ENCODE measurements at regions of chr2 and their contacts with region 1.

Region 1: GRCh38 chr2:26785431-26786206 is at the start of gene CENPA:
- DNase-seq: peak; percentile 98
- ATAC-seq: peak; percentile 99
- H3K4me3 ChIP-seq: peak within 1 kb of the TSS; percentile 51 to 81 (median 71)
- H3K4me3 Mint-ChIP-seq: peak within 1 kb of the TSS; percentile 93
- H3K27ac ChIP-seq: peak within 1 kb of the TSS; percentile 27 to 41
- H3K27ac Mint-ChIP-seq: peak within 1 kb of the TSS; percentile 83
- H3K4me1 ChIP-seq: peaks cover 8 to 14% of the 10 kb centered on the region in 2 donors
- H3K4me1 Mint-ChIP-seq: peaks cover 13% of the 10 kb centered on the region
- H3K27me3 ChIP-seq: no peaks in the 10 kb centered on the region
- H3K27me3 Mint-ChIP-seq: peaks cover 3% of the 10 kb centered on the region
- CTCF ChIP-seq: peak; percentile 7
- total RNA-seq, gene CENPA: not detected in 2 replicates

Region 2: DNA sequence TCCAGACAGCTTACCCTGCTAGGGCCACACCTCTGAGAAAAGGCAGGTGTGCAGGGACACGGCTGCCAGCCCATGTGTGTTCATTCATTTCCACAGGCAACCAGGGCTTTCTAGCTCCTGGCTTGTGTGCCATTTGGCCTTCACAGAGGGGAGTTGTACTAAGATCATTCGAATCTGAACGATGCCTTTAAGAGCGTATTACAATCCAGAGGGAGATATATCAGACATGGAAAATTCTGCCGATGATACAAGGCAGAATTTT is 243.5 kb before region 1 on chr2:
- CTCF ChIA-PET with region 1: no interaction called
- POLR2A ChIA-PET with region 1: no interaction called
- intact Hi-C with region 1: no loop called
- DNase-seq: no peak
- ATAC-seq: no peak
- H3K4me3 ChIP-seq: no peak overlapping the region
- H3K4me3 Mint-ChIP-seq: no peak overlapping the region
- H3K27ac ChIP-seq: no peak overlapping the region
- H3K27ac Mint-ChIP-seq: no peak overlapping the region
- H3K4me1 ChIP-seq: no peaks in the 10 kb centered on the region
- H3K4me1 Mint-ChIP-seq: no peaks in the 10 kb centered on the region
- H3K27me3 ChIP-seq: peaks cover 0 to 3% (median 0%) of the 10 kb centered on the region in 4 experiments
- H3K27me3 Mint-ChIP-seq: peaks cover 10% of the 10 kb centered on the region
- CTCF ChIP-seq: no peak

Region 3: GRCh38 chr2:26764078-26764887 is 21.3 kb before region 1 on chr2 and contains the start of gene SLC35F6:
- CTCF ChIA-PET with region 1: no interaction called
- POLR2A ChIA-PET with region 1: interaction called, 7 read pairs
- intact Hi-C with region 1: loop called (anchors 1 kb)
- DNase-seq: peak; percentile 89
- ATAC-seq: peak; percentile 98
- H3K4me3 ChIP-seq: peak within 1 kb of the TSS; percentile 78 to 98 (median 89)
- H3K4me3 Mint-ChIP-seq: peak within 1 kb of the TSS; percentile 82
- H3K27ac ChIP-seq: peak within 1 kb of the TSS; percentile 62 to 84
- H3K27ac Mint-ChIP-seq: peak within 1 kb of the TSS; percentile 82
- H3K4me1 ChIP-seq: peaks cover 14 to 25% of the 10 kb centered on the region in 2 donors
- H3K4me1 Mint-ChIP-seq: peaks cover 22% of the 10 kb centered on the region
- H3K27me3 ChIP-seq: no peaks in the 10 kb centered on the region
- H3K27me3 Mint-ChIP-seq: no peaks in the 10 kb centered on the region
- CTCF ChIP-seq: no peak
- total RNA-seq, gene SLC35F6: 13.3 and 15.2 TPM in 2 replicates

Region 4: GRCh38 chr2:26970244-26970920 is 184.8 kb after region 1 on chr2 and contains the start of gene MAPRE3:
- CTCF ChIA-PET with region 1: no interaction called
- POLR2A ChIA-PET with region 1: no interaction called
- intact Hi-C with region 1: loop called (anchors 2 kb)
- DNase-seq: peak; percentile 92
- ATAC-seq: peak; percentile 94
- H3K4me3 ChIP-seq: peak within 1 kb of the TSS; percentile 59 to 70 (median 62)
- H3K4me3 Mint-ChIP-seq: peak within 1 kb of the TSS; percentile 91
- H3K27ac ChIP-seq: peak within 1 kb of the TSS in 1 of 2 donors; percentile 47
- H3K27ac Mint-ChIP-seq: peak within 1 kb of the TSS; percentile 59
- H3K4me1 ChIP-seq: peaks cover 11 to 12% of the 10 kb centered on the region in 2 donors
- H3K4me1 Mint-ChIP-seq: peaks cover 19% of the 10 kb centered on the region
- H3K27me3 ChIP-seq: peaks cover 2 to 11% (median 5%) of the 10 kb centered on the region in 4 experiments
- H3K27me3 Mint-ChIP-seq: peaks cover 26% of the 10 kb centered on the region
- CTCF ChIP-seq: no peak
- total RNA-seq, gene MAPRE3: 5.4 and 7.1 TPM in 2 replicates

Region 5: DNA sequence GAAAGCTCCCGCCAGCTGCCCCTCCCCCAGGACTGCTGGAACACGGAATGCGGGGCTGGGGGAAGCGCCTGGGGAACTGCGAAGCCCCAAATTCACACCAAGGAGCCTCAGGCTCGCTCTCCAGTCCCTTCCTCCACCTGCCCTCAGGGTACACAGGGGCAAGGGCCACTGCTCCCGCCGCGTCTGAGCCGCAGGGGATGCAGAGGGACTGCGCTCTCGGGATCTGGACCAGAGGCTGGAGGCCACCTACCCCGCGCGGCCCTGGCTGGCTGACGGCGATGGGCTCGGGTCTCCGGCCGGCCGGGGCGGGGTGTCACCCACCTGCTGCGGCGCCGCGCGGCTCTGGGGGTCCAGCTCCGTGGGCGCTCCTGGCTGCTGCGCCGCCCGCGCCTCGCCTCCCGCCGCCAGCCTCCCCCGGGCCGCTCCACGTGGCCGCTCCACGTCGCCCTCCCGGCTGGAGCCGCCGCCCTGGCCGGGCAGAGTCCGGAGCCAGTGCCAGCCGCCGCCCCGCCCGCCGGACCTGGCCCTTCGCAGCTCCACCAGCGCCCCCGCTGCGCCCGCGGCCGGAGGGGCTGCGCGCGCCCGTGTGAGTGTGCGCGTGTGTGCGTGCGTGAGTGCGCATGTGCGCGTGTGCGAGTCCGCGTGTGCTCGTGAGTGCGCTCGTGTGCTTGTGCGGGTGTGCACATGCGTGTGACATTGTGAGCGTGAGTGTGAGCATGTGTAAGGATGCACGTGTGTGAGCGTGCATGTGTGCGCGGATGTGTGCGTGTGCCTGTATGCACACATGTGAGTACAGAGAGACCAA is 333.1 kb after region 1 on chr2 and contains the start of gene CGREF1:
- CTCF ChIA-PET with region 1: no interaction called
- POLR2A ChIA-PET with region 1: no interaction called
- intact Hi-C with region 1: no loop called
- DNase-seq: peak; percentile 38
- ATAC-seq: no peak
- H3K4me3 ChIP-seq: peak within 1 kb of the TSS in 2 of 5 experiments; percentile 38 to 50
- H3K4me3 Mint-ChIP-seq: peak within 1 kb of the TSS; percentile 85
- H3K27ac ChIP-seq: no peak within 1 kb of the TSS
- H3K27ac Mint-ChIP-seq: no peak within 1 kb of the TSS
- H3K4me1 ChIP-seq: peaks cover 16 to 19% of the 10 kb centered on the region in 2 donors
- H3K4me1 Mint-ChIP-seq: peaks cover 16% of the 10 kb centered on the region
- H3K27me3 ChIP-seq: peaks cover 0 to 26% (median 12%) of the 10 kb centered on the region in 4 experiments
- H3K27me3 Mint-ChIP-seq: peaks cover 39% of the 10 kb centered on the region
- CTCF ChIP-seq: no peak
- total RNA-seq, gene CGREF1: not detected in 2 replicates